MCF 10A (cell line): ENCODE measurements at regions of chr9 and their contacts with region 1.

Region 1: DNA sequence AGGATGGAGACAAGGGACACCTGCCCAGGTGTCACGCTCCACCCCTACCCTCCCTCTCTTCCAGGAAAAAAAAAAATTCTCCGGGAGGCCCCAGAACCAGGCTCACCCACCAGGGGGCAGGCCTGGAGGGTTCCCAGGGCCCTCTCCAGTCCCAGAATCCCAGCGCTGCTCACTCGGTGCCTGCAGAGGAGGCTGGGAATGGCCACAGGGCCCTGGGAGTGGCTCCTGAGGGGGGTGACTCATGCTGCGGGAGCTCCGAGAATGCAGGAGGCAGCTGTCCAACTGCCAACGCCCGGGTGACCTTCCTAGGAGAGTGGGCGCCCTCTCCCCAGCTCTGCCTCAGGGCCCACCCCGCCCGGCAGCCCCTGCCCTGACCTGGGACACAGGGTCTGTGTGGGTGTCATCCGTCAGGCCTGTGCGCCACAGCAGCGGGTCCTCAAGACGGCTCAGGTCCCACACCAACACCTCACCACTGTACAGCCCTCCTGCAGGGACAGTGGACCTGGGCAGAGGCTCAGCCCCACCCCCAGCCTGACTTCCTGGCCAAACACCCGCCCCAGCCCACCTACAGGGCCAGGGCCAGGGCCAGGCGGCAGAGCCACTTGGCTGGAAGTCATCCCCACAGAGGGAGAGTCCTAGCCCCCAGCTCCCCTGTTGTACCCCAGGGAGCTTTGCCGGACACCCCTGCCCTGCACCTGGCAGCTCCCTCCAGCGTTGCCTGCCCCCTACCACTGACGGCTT is 21.2 kb downstream of the DYNC2I2 start:
- DNase-seq: peak; percentile 97
- H3K4me3 Mint-ChIP-seq: peak overlapping the region; percentile 69
- H3K27ac Mint-ChIP-seq: peak overlapping the region; percentile 94
- H3K4me1 Mint-ChIP-seq: peaks cover 25% of the 10 kb centered on the region
- H3K27me3 Mint-ChIP-seq: no peaks in the 10 kb centered on the region
- CTCF ChIP-seq: peak; percentile 90

Region 2: GRCh38 chr9:128094166-128094967 is 541.1 kb before region 1 on chr9:
- CTCF ChIA-PET with region 1: no interaction called
- POLR2A ChIA-PET with region 1: no interaction called
- intact Hi-C with region 1: no loop called
- DNase-seq: peak; percentile 99
- H3K4me3 Mint-ChIP-seq: peak overlapping the region; percentile 66
- H3K27ac Mint-ChIP-seq: peak overlapping the region; percentile 99
- H3K4me1 Mint-ChIP-seq: peaks cover 21% of the 10 kb centered on the region
- H3K27me3 Mint-ChIP-seq: no peaks in the 10 kb centered on the region
- CTCF ChIP-seq: no peak

Region 3: DNA sequence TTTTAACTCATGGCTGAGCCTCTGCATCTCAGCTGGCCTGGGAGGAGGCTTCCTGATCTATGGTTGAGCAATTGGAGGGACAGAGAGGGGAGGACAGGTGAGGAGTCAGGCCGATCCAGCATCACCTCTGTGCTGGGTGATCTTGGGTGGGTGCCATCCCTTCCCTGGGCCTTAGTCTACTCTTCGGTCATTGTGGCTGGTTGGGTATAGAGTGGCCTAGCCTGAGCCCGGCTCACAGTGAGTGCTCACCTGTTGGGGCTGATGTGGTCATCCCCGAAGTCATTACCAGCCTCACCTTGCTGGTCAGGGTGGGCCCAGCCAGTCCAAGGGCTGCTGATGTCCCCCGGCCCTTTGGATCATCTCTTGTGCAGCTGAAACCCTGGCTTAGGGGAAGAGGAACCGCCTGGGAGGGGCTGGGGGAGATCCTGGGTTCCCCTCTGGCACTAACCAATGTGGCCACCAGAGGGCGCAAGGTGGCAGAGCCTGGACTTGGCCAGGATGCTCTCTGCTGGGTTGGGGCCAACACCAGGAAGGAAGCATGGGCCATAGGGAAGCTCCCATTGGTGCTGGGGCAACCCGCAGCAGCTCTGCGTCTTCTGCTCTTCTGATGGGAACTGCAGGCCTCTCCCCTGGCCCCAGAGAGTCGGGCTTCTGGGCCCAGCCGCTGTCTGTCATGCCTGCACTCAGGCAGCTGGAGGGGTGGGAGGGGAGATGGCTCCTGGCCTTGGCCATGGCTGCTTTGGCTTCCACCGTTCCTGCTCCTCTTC is 196.9 kb before region 1 on chr9:
- CTCF ChIA-PET with region 1: interaction called, 3 read pairs
- POLR2A ChIA-PET with region 1: no interaction called
- intact Hi-C with region 1: loop called (anchors 1 kb)
- DNase-seq: peak; percentile 85
- H3K4me3 Mint-ChIP-seq: no peak overlapping the region
- H3K27ac Mint-ChIP-seq: no peak overlapping the region
- H3K4me1 Mint-ChIP-seq: no peaks in the 10 kb centered on the region
- H3K27me3 Mint-ChIP-seq: no peaks in the 10 kb centered on the region
- CTCF ChIP-seq: peak; percentile 90

Region 4: GRCh38 chr9:128552153-128552743 is 83.2 kb before region 1 on chr9 and contains the start of gene SPTAN1:
- CTCF ChIA-PET with region 1: interaction called, 7 read pairs
- POLR2A ChIA-PET with region 1: interaction called, 29 read pairs
- intact Hi-C with region 1: no loop called
- DNase-seq: peak; percentile 86
- H3K4me3 Mint-ChIP-seq: no peak within 1 kb of the TSS
- H3K27ac Mint-ChIP-seq: peak within 1 kb of the TSS; percentile 90
- H3K4me1 Mint-ChIP-seq: peaks cover 17% of the 10 kb centered on the region
- H3K27me3 Mint-ChIP-seq: no peaks in the 10 kb centered on the region
- CTCF ChIP-seq: no peak
- total RNA-seq, gene SPTAN1: 254 and 280 TPM in 2 replicates

Region 5: GRCh38 chr9:128656416-128657343 is 21.2 kb after region 1 on chr9 and contains the start of gene DYNC2I2:
- CTCF ChIA-PET with region 1: interaction called, 15 read pairs
- POLR2A ChIA-PET with region 1: interaction called, 7 read pairs
- intact Hi-C with region 1: no loop called
- DNase-seq: peak; percentile 93
- H3K4me3 Mint-ChIP-seq: peak within 1 kb of the TSS; percentile 67
- H3K27ac Mint-ChIP-seq: peak within 1 kb of the TSS; percentile 98
- H3K4me1 Mint-ChIP-seq: peaks cover 8% of the 10 kb centered on the region
- H3K27me3 Mint-ChIP-seq: no peaks in the 10 kb centered on the region
- CTCF ChIP-seq: no peak
- total RNA-seq, gene DYNC2I2: 31.7 and 43.7 TPM in 2 replicates

Region 6: GRCh38 chr9:128723866-128724743 is 88.7 kb after region 1 on chr9 and contains the start of gene ZDHHC12:
- CTCF ChIA-PET with region 1: no interaction called
- POLR2A ChIA-PET with region 1: interaction called, 12 read pairs
- intact Hi-C with region 1: no loop called
- DNase-seq: peak; percentile 99
- H3K4me3 Mint-ChIP-seq: peak within 1 kb of the TSS; percentile 80
- H3K27ac Mint-ChIP-seq: peak within 1 kb of the TSS; percentile 79
- H3K4me1 Mint-ChIP-seq: peaks cover 36% of the 10 kb centered on the region
- H3K27me3 Mint-ChIP-seq: no peaks in the 10 kb centered on the region
- CTCF ChIP-seq: no peak
- total RNA-seq, gene ZDHHC12: 22.1 and 22.9 TPM in 2 replicates

Region 7: GRCh38 chr9:128818099-128818838 is 182.8 kb after region 1 on chr9 and contains the start of gene ENDOG:
- CTCF ChIA-PET with region 1: interaction called, 3 read pairs
- POLR2A ChIA-PET with region 1: interaction called, 8 read pairs
- intact Hi-C with region 1: loop called (anchors 10 kb)
- DNase-seq: peak; percentile 97
- H3K4me3 Mint-ChIP-seq: peak within 1 kb of the TSS; percentile 72
- H3K27ac Mint-ChIP-seq: no peak within 1 kb of the TSS
- H3K4me1 Mint-ChIP-seq: no peaks in the 10 kb centered on the region
- H3K27me3 Mint-ChIP-seq: no peaks in the 10 kb centered on the region
- CTCF ChIP-seq: peak; percentile 94
- total RNA-seq, gene ENDOG: 18.2 and 22.0 TPM in 2 replicates

Region 8: GRCh38 chr9:128881901-128882681 is 246.6 kb after region 1 on chr9 and contains the starts of genes KYAT1 and LRRC8A:
- CTCF ChIA-PET with region 1: no interaction called
- POLR2A ChIA-PET with region 1: no interaction called
- intact Hi-C with region 1: no loop called
- DNase-seq: peak; percentile 96
- H3K4me3 Mint-ChIP-seq: peak within 1 kb of the TSS; percentile 99
- H3K27ac Mint-ChIP-seq: peak within 1 kb of the TSS; percentile 95
- H3K4me1 Mint-ChIP-seq: peaks cover 40% of the 10 kb centered on the region
- H3K27me3 Mint-ChIP-seq: no peaks in the 10 kb centered on the region
- CTCF ChIP-seq: no peak
- total RNA-seq, gene KYAT1: 3.8 and 5.7 TPM in 2 replicates
- total RNA-seq, gene LRRC8A: 30.9 and 31.6 TPM in 2 replicates